ENCODE measurements at regions of chr11 and their contacts with region 1.

Region 1: DNA sequence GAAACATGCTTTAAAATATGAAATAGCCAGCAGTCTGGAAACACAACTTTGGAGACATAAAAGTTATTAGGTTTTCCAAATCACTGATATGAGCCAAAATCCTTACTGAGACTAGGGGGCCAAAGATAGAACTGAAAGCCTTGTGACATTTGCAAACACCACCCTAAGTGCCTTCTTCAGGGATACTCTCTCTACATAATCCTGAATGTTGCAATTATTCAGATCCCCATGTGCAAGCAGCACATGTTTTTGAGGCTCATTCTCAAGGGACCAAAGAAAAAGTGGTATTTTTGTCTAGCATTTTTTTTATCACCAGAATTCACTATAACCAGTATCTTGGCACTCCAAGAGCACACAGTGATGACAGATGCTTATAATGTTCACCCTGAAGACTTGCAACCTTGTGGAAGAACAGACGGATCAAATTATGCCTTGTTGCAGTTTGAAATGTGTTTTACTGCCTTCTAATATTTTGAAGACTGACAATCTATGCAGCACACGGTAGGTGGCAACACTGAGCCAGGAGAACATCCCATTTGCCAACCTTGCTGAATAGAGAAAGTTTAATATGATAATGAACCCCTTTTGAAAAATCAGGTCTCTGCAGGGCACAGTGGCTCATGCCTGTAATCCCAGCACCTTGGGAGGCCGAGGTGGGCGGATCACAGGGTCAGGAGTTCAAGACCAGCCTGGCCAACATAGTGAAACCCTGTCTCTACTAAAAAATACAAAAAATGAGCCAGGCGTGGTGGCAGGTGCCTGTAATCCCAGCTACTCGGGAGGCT is 78.5 kb downstream of the PLEKHA7 start:
- DNase-seq: no peak
- H3K4me3 ChIP-seq: no peak overlapping the region
- H3K27ac ChIP-seq: no peak overlapping the region
- H3K4me1 ChIP-seq: peaks cover 7 to 38% (median 25%) of the 10 kb centered on the region in 3 donors
- H3K27me3 ChIP-seq: no peaks in the 10 kb centered on the region
- CTCF ChIP-seq: peak in 5 of 6 experiments; percentile 51 to 71 (median 59)
- POLR2A ChIP-seq: no peak

Region 2: GRCh38 chr11:16722581-16723344 is 212.9 kb before region 1 on chr11:
- intact Hi-C with region 1: no loop called
- DNase-seq: no peak
- H3K4me3 ChIP-seq: no peak overlapping the region
- H3K27ac ChIP-seq: no peak overlapping the region
- H3K4me1 ChIP-seq: no peaks in the 10 kb centered on the region
- H3K27me3 ChIP-seq: no peaks in the 10 kb centered on the region
- CTCF ChIP-seq: no peak
- POLR2A ChIP-seq: no peak

Region 3: GRCh38 chr11:16791191-16791961 is 144.3 kb before region 1 on chr11:
- intact Hi-C with region 1: loop called (anchors 10 kb)
- DNase-seq: no peak
- H3K4me3 ChIP-seq: no peak overlapping the region
- H3K27ac ChIP-seq: peak overlapping the region; percentile 16 to 81 (median 50)
- H3K4me1 ChIP-seq: peaks cover 9 to 67% (median 36%) of the 10 kb centered on the region in 3 donors
- H3K27me3 ChIP-seq: no peaks in the 10 kb centered on the region
- CTCF ChIP-seq: no peak
- POLR2A ChIP-seq: no peak

Region 4: GRCh38 chr11:16862746-16863145 is 73.0 kb before region 1 on chr11:
- intact Hi-C with region 1: no loop called
- DNase-seq: no peak
- H3K4me3 ChIP-seq: no peak overlapping the region
- H3K27ac ChIP-seq: no peak overlapping the region
- H3K4me1 ChIP-seq: peaks cover 0 to 23% (median 0%) of the 10 kb centered on the region in 3 donors
- H3K27me3 ChIP-seq: no peaks in the 10 kb centered on the region
- CTCF ChIP-seq: no peak
- POLR2A ChIP-seq: no peak